Colonic mucosa (tissue), 4 donors: ENCODE measurements at regions of chr10 and their contacts with region 1.

Region 1: DNA sequence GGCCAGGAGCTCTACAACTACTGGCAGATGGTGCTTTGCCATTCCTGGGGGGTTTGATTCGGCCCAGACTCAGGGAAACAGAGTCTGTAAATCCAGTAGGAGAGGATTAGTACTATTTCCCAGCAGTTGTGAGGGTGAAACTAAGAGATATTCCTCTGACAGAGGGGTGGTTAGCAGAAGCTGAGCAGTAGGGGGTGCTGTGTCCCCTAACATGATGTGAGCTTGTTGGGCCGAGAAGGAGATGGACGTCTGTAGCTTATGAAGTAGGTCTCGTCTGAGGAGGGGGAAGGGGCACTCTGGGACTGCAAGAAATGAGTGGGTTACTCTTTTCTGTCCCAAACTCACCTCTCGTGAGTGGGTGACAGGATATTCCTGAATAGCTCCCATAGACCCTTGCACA is 179.2 kb upstream of the MBL2 start:
- DNase-seq: peak; percentile 79
- H3K4me3 ChIP-seq: no peak overlapping the region
- H3K27ac ChIP-seq: no peak overlapping the region
- H3K4me1 ChIP-seq: no peaks in the 10 kb centered on the region
- H3K27me3 ChIP-seq: no peaks in the 10 kb centered on the region
- CTCF ChIP-seq: peak; percentile 33

Region 2: GRCh38 chr10:53440601-53441000 is 488.8 kb after region 1 on chr10:
- intact Hi-C with region 1: loop called (anchors 10 kb)
- DNase-seq: no peak
- H3K4me3 ChIP-seq: no peak overlapping the region
- H3K27ac ChIP-seq: no peak overlapping the region
- H3K4me1 ChIP-seq: no peaks in the 10 kb centered on the region
- H3K27me3 ChIP-seq: no peaks in the 10 kb centered on the region
- CTCF ChIP-seq: no peak